ENCODE measurements at regions of chr1 and their contacts with region 1.

Region 1: GRCh38 chr1:55021965-55022546 is 17.3 kb upstream of the PCSK9 start:
- DNase-seq: peak; percentile 65
- ATAC-seq: peak; percentile 100
- H3K4me3 ChIP-seq: no peak overlapping the region
- H3K27ac ChIP-seq: no peak overlapping the region
- H3K4me1 ChIP-seq: no peaks in the 10 kb centered on the region
- H3K27me3 ChIP-seq: no peaks in the 10 kb centered on the region; the same call in 1 of the 2 replicates
- CTCF ChIP-seq: peak; percentile 96

Region 2: DNA sequence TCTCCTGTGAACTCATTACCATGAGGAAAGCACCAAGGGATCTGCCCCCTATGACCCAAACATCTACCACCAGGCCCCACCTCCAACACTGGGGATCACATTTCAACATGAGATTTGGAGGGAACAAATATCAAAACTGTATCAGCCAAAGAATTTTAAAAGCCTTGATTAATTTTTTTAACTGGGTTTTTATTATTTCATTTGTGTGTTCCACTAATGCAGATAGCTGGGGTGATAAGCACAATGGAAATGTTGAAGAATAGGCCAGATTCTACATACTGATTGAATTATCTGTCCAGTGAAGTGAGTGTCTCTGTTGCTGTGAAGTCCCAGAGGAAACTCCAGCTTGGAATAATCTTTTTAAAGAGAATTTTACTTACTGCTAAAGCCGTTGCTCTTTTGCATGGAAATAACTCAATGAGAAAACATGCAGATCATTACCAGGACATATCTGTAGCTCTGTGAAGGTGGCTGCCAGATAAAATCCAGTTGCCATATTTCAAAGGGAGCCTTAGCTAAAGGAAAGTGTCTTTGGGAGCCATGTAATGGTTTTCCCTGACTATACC is 90.7 kb before region 1 on chr1:
- CTCF ChIA-PET with region 1: no interaction called
- POLR2A ChIA-PET with region 1: no interaction called
- in situ Hi-C with region 1: no loop called
- intact Hi-C with region 1: no loop called
- DNase-seq: no peak
- ATAC-seq: no peak
- H3K4me3 ChIP-seq: no peak overlapping the region
- H3K27ac ChIP-seq: no peak overlapping the region
- H3K4me1 ChIP-seq: no peaks in the 10 kb centered on the region
- H3K27me3 ChIP-seq: no peaks in the 10 kb centered on the region; the same call in 1 of the 2 replicates
- CTCF ChIP-seq: no peak

Region 3: GRCh38 chr1:54944610-54945544 is 77.2 kb before region 1 on chr1:
- CTCF ChIA-PET with region 1: interaction called, 30 read pairs
- POLR2A ChIA-PET with region 1: no interaction called
- in situ Hi-C with region 1: no loop called
- intact Hi-C with region 1: no loop called
- DNase-seq: peak; percentile 47
- ATAC-seq: peak; percentile 85
- H3K4me3 ChIP-seq: no peak overlapping the region
- H3K27ac ChIP-seq: no peak overlapping the region
- H3K4me1 ChIP-seq: no peaks in the 10 kb centered on the region
- H3K27me3 ChIP-seq: no peaks in the 10 kb centered on the region
- CTCF ChIP-seq: peak; percentile 89

Region 4: DNA sequence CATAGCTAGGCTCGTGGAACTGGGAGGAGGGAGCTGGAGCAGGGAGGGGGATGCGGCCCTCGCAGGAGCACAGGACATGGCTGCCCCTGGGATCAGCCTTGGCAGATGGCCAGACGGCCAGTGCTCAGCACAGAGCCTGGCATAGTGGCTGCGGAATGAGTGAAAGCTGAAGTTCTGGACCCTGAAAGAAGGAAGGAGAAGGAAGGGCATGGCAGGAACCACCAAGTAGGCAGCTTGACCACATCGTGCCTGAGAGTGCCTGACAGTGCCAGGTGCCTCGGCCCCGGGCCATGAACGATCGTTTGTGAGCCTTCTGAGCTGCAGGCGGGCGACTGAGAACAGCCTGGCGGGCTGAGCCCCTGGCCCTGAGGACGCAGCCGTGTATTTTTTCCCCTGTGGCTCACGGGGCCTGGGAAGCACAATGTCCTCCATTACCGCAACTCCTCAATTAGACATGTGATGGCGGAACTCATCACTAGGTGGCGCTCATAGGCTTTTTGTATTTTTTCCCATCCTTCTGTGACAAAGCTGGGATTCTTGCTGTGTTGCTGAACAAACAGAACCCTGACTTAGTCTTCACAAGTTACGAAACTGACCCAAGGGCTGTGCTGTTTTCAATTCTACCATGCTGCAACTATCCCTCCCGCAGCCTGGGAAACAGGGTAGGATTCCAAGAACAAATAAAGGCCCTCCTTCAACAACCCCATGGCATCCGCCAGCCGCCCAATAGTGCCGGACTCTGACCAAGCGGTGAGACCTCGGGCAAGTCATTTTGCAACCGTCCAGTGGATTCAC is 71.5 kb before region 1 on chr1:
- CTCF ChIA-PET with region 1: interaction called, 11 read pairs
- POLR2A ChIA-PET with region 1: no interaction called
- in situ Hi-C with region 1: no loop called
- intact Hi-C with region 1: no loop called
- DNase-seq: peak; percentile 85
- ATAC-seq: peak; percentile 90
- H3K4me3 ChIP-seq: peak overlapping the region; percentile 8 to 47
- H3K27ac ChIP-seq: peak overlapping the region; percentile 23; the same call in 1 of the 2 replicates
- H3K4me1 ChIP-seq: peaks cover 5% of the 10 kb centered on the region; the same call in 1 of the 2 replicates
- H3K27me3 ChIP-seq: no peaks in the 10 kb centered on the region
- CTCF ChIP-seq: peak; percentile 86

Region 5: GRCh38 chr1:55329091-55329490 is 307.0 kb after region 1 on chr1:
- CTCF ChIA-PET with region 1: no interaction called
- POLR2A ChIA-PET with region 1: no interaction called
- in situ Hi-C with region 1: no loop called
- intact Hi-C with region 1: no loop called
- DNase-seq: no peak
- ATAC-seq: no peak
- H3K4me3 ChIP-seq: no peak overlapping the region
- H3K27ac ChIP-seq: no peak overlapping the region
- H3K4me1 ChIP-seq: no peaks in the 10 kb centered on the region
- H3K27me3 ChIP-seq: no peaks in the 10 kb centered on the region
- CTCF ChIP-seq: no peak

Measured in Panc1 (cell line).